Vagina (tissue), 2 donors: ENCODE measurements at regions of chr6 and their contacts with region 1.

Region 1: GRCh38 chr6:101779051-101779844 is 385.7 kb downstream of the GRIK2 start:
- DNase-seq: no peak
- H3K4me3 ChIP-seq: no peak overlapping the region
- H3K27ac ChIP-seq: no peak overlapping the region
- H3K4me1 ChIP-seq: no peaks in the 10 kb centered on the region
- H3K27me3 ChIP-seq: no peaks in the 10 kb centered on the region
- CTCF ChIP-seq: no peak
- POLR2A ChIP-seq: no peak

Region 2: GRCh38 chr6:101741474-101742171 is 37.6 kb before region 1 on chr6:
- intact Hi-C with region 1: no loop called
- DNase-seq: no peak
- H3K4me3 ChIP-seq: no peak overlapping the region
- H3K27ac ChIP-seq: no peak overlapping the region
- H3K4me1 ChIP-seq: no peaks in the 10 kb centered on the region
- H3K27me3 ChIP-seq: no peaks in the 10 kb centered on the region
- CTCF ChIP-seq: no peak
- POLR2A ChIP-seq: no peak

Region 3: DNA sequence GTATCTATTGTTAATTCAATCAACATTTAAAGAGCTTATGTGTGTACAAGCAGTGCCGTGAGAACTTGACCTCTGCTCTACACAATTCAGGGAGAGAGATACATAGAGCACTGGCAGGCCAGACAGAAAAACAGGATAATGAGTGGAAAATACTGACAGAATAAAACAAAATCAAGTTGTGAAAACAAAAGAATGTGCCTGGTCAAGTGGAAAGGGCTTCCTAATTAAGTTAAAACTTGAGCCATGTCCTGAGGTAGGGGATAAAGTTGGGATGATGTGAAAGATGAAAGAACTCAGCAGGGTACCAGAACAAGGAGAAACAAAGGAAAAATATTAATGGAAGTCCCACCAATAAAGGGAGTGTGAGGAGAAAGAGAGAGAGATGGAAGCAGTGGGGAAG is 287.1 kb after region 1 on chr6:
- intact Hi-C with region 1: no loop called
- DNase-seq: no peak
- H3K4me3 ChIP-seq: no peak overlapping the region
- H3K27ac ChIP-seq: no peak overlapping the region
- H3K4me1 ChIP-seq: no peaks in the 10 kb centered on the region
- H3K27me3 ChIP-seq: no peaks in the 10 kb centered on the region
- CTCF ChIP-seq: no peak
- POLR2A ChIP-seq: no peak

Region 4: GRCh38 chr6:103356531-103356930 is 1577.3 kb after region 1 on chr6:
- intact Hi-C with region 1: loop called (anchors 10 kb)
- DNase-seq: no peak
- H3K4me3 ChIP-seq: no peak overlapping the region
- H3K27ac ChIP-seq: no peak overlapping the region
- H3K4me1 ChIP-seq: no peaks in the 10 kb centered on the region
- H3K27me3 ChIP-seq: no peaks in the 10 kb centered on the region
- CTCF ChIP-seq: no peak
- POLR2A ChIP-seq: no peak